OCI-LY7 (cell line): ENCODE measurements at regions of chr2 and their contacts with region 1.

Region 1: DNA sequence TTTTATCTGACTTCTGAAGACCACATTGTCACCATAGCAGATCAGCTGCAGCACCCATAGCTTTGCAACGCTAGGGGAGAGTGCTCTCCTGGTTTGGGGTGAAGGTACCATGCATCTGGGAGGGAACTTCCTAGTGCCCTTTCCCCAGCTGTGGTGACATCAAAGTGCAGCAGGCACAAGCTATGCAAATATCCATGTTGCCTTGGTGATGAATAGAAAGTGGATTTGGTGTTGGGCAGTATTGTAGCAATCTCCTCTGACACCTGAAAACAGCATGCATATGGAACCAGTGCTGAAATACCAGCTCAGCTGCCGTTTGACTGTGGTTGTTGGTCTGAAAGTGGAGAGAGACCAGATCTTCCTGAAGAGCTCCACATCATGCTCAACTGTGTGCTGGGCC is 37.1 kb downstream of the BCL2L11 start:
- DNase-seq: peak; percentile 80
- H3K4me3 ChIP-seq: peak overlapping the region; percentile 45
- H3K27ac ChIP-seq: peak overlapping the region; percentile 89
- H3K4me1 ChIP-seq: peaks cover 50% of the 10 kb centered on the region
- CTCF ChIP-seq: 0 out of 2 replicates have a peak, but pooled peaks have one; percentile 28

Region 2: DNA sequence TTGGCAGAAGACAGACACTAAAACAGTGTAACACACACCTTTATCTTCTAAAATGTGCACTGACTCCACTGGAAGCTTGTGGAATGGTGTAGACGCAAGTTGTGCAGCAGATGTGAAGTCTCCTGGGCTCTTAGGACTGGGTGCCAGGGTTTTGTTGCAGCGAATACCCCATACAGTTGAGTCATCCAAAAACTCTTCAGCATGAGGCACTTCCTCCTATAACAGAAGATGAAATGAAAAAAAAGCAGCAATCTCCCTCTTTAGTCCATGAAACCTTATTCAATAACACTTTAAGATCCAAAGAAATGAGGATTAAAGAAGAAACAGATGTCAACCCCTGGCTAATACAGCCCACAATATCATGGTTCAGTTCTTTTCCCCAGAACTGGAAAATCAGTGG is 502.1 kb before region 1 on chr2:
- CTCF ChIA-PET with region 1: no interaction called
- POLR2A ChIA-PET with region 1: no interaction called
- intact Hi-C with region 1: no loop called
- DNase-seq: no peak
- H3K4me3 ChIP-seq: no peak overlapping the region
- H3K27ac ChIP-seq: no peak overlapping the region
- H3K4me1 ChIP-seq: no peaks in the 10 kb centered on the region
- CTCF ChIP-seq: no peak

Region 3: DNA sequence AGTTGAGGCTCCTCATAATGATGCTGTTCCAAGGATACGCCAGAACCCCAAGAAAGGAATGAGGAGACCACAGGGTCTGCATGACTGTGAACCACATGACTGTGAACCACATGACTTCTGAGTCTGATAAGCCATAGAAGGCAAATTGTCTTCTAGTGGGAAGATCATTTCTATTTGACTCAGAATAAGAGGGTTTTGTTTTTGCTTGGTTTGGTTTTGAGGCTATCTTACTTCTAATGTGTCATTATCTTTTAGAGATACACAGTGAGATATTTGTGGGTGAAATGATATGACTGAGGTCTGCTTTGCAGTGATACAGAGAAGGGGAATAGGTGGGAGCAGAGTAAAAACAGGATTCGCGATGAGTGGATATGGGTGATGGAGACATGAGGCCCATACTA is 66.0 kb before region 1 on chr2:
- CTCF ChIA-PET with region 1: no interaction called
- POLR2A ChIA-PET with region 1: no interaction called
- intact Hi-C with region 1: no loop called
- DNase-seq: no peak
- H3K4me3 ChIP-seq: no peak overlapping the region
- H3K27ac ChIP-seq: no peak overlapping the region
- H3K4me1 ChIP-seq: no peaks in the 10 kb centered on the region
- CTCF ChIP-seq: no peak

Region 4: DNA sequence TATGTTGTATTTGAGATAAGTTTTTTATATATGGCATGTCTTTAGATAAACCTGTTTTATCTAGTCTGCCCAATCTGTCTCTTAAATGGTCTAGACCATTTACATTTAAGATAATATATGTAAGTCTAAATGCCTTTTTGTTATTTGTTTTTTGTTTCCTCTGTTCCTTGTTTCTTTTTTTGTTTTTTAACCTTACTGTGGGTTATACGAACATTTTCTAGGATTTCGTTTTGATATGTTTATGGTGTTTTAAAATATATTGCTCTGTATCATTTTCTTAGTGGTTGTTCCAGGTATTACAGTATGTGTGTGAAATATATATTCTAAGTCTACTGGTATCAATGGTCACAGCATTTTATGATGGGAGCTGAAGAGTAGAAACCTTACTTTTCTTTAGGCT is 23.7 kb before region 1 on chr2:
- CTCF ChIA-PET with region 1: no interaction called
- POLR2A ChIA-PET with region 1: interaction called, 15 read pairs
- intact Hi-C with region 1: no loop called
- DNase-seq: no peak
- H3K4me3 ChIP-seq: no peak overlapping the region
- H3K27ac ChIP-seq: no peak overlapping the region
- H3K4me1 ChIP-seq: peaks cover 51% of the 10 kb centered on the region
- CTCF ChIP-seq: peak; percentile 68